GM12878 (cell line): ENCODE measurements at regions of chr16 and their contacts with region 1.

Region 1: DNA sequence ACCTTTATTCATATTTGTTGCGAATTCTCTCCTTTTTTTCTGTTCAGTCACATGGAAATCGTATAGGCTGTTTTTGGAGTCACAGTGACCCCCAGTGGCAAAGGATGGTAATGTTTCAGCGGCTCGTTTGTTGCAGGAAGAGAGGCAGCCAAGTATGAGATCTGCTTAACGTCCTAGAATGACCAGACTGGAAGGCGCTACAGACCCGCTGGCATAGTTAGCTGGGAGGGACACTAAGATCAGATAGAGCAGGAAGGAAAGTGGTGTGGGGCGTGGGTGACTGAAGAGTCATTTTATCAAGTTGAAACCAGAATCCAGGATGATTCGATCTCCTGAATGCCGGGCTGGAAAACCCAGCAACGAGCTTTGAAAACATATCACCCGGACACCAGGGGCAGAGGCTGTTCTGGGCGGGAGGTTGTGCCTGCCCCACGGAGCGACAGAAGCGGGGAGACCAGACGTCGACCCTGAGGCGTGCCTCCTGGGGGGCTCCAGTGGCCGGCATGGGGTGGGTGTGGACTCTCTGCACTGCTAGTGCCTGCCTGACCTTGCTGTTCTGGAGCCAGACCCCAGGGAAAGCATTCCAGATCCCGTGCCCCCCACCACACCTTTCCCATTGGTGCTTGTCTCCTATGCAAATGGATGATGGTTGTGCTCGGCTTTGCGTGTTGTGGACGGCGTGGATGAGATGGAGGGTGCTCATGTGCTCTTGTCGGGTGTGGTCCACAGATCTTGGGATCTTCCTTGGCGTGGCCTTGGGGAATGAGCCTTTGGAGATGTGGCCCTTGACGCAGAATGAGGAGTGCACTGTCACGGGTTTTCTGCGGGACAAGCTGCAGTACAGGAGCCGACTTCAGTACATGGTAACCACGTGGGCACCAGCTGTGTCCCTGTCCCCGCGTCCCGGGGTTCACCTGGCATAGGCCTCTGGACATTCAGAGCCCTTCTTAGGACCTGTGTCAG is 7.7 kb downstream of the IL34 start:
- DNase-seq: peak; percentile 44
- ATAC-seq: peak; percentile 86
- H3K4me3 ChIP-seq: no peak overlapping the region
- H3K27ac ChIP-seq: no peak overlapping the region
- H3K4me1 ChIP-seq: no peaks in the 10 kb centered on the region
- H3K27me3 ChIP-seq: no peaks in the 10 kb centered on the region
- CTCF ChIP-seq: peak; percentile 80 to 97 (median 96); a peak in 5 of 6 replicates
- EP300 ChIP-seq: no peak
- POLR2A ChIP-seq: no peak
- RAD21 ChIP-seq: peak; percentile 93

Region 2: DNA sequence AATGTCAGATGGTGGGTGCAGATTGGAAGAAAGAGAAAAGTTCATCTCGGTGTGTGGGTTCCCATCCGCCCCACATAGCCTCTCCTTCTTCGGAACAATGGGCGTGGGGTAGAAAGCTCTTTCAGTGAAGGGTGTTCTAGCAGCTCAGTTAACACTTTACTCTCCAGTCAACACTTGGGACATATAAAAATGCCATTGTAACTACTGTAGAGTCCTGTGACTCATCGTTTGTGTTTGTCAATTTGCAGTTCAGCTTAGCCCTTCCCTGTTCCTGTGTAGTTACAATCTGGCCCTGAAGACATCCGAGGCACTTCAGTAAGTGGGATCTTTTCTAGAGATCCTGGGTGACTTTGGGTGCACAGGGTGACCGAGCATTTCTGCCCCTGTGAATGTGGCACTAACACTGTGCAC is 492.0 kb before region 1 on chr16:
- CTCF ChIA-PET with region 1: interaction called, 9 read pairs
- POLR2A ChIA-PET with region 1: interaction called, 6 read pairs
- RAD21 ChIA-PET with region 1: no interaction called
- SMC1A ChIA-PET with region 1: interaction called, 6 read pairs
- in situ Hi-C with region 1: no loop called
- intact Hi-C with region 1: loop called (anchors 10 kb)
- DNase-seq: no peak
- ATAC-seq: no peak
- H3K4me3 ChIP-seq: no peak overlapping the region
- H3K27ac ChIP-seq: no peak overlapping the region
- H3K4me1 ChIP-seq: no peaks in the 10 kb centered on the region
- H3K27me3 ChIP-seq: no peaks in the 10 kb centered on the region
- CTCF ChIP-seq: no peak
- EP300 ChIP-seq: no peak
- POLR2A ChIP-seq: no peak
- RAD21 ChIP-seq: no peak

Region 3: DNA sequence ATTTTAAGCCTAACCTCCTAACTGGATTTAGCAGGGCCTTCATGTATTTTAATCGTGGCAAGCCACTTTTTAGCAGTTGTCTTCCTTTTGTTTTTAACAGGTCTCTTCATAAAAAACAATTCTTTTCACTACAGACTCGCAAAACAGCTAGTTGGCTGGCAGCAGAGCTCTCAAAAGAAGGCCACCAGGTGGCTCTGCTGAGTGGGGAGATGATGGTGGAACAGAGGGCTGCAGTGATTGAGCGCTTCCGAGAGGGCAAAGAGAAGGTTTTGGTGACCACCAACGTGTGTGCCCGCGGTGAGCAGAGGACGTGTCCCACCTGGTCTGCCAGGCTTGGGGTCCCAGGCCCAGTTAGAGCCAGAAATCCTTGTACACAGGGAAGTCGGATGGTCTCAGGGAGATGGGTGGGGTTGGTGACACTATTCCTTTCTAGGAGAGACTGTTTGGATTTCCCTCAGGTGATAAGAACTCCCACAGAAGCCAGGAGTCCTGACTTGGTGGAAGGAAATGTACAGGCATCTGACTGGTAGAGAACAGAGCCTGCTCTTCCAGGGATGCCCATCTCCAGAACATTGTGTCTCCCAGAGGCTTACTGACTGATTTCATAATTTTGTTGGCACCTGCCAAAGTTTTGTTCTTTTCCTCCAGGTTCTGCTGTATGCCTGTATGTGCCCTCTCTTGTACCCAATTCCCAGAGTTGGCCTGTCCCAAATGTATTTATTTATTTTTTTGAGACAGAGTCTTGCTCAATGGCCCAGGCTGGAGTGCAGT is 322.3 kb before region 1 on chr16:
- CTCF ChIA-PET with region 1: interaction called, 28 read pairs
- POLR2A ChIA-PET with region 1: no interaction called
- RAD21 ChIA-PET with region 1: interaction called, 9 read pairs
- SMC1A ChIA-PET with region 1: interaction called, 6 read pairs
- in situ Hi-C with region 1: no loop called
- intact Hi-C with region 1: loop called (anchors 2 kb)
- DNase-seq: no peak
- ATAC-seq: peak; percentile 86
- H3K4me3 ChIP-seq: no peak overlapping the region
- H3K27ac ChIP-seq: no peak overlapping the region
- H3K4me1 ChIP-seq: no peaks in the 10 kb centered on the region
- H3K27me3 ChIP-seq: no peaks in the 10 kb centered on the region
- CTCF ChIP-seq: peak; percentile 36 to 54 (median 40); a peak in 5 of 6 replicates
- EP300 ChIP-seq: no peak
- POLR2A ChIP-seq: no peak
- RAD21 ChIP-seq: peak; percentile 28

Region 4: GRCh38 chr16:70364399-70364798 is 289.7 kb before region 1 on chr16:
- CTCF ChIA-PET with region 1: interaction called, 15 read pairs
- POLR2A ChIA-PET with region 1: interaction called, 5 read pairs
- RAD21 ChIA-PET with region 1: interaction called, 3 read pairs
- SMC1A ChIA-PET with region 1: interaction called, 12 read pairs
- in situ Hi-C with region 1: loop called (anchors 5 kb)
- intact Hi-C with region 1: no loop called
- DNase-seq: no peak
- ATAC-seq: peak; percentile 56
- H3K4me3 ChIP-seq: no peak overlapping the region
- H3K27ac ChIP-seq: peak overlapping the region; percentile 27; the same call in 1 of the 2 replicates
- H3K4me1 ChIP-seq: no peaks in the 10 kb centered on the region
- H3K27me3 ChIP-seq: no peaks in the 10 kb centered on the region
- CTCF ChIP-seq: no peak
- EP300 ChIP-seq: no peak
- POLR2A ChIP-seq: no peak
- RAD21 ChIP-seq: no peak

Region 5: DNA sequence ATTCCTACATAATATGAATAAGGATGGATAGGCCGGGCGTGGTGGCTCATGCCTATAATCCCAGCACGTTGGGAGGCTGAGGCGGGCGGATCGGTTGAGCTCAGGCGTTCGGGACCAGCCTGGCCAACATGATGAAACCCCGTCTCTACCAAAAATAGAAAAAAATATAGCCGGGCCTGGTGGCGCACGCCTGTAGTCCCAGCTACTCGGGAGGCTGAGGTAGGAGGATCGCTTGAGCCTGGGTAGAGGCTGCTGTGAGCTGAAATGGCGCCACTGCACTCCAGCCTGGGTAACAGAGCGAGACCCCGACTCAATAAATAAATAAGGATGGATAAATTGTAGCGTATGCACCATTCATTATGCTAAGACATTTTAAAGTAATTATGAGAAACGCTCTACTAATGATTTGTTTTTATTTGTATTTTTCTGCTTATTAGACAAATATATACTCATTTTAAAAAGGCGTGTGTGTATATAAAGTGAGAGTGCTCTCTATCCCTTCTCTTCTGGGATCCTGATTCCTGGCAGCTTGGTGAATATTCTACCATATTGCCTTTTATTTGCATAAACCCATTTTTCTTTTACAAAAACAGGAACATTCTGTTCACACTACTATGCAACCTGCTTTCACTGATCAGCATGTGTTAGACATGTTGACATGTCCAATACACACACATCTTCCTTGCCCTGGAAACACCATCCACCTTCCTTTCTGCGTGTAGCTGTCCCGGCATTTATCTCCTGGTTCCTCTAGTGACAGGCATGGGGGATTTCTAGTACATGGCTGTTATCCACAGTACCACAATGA is 281.0 kb before region 1 on chr16:
- CTCF ChIA-PET with region 1: interaction called, 15 read pairs
- POLR2A ChIA-PET with region 1: interaction called, 5 read pairs
- RAD21 ChIA-PET with region 1: interaction called, 4 read pairs
- SMC1A ChIA-PET with region 1: interaction called, 12 read pairs
- in situ Hi-C with region 1: loop called (anchors 5 kb)
- intact Hi-C with region 1: loop called (anchors 5 kb)
- DNase-seq: no peak
- ATAC-seq: no peak
- H3K4me3 ChIP-seq: no peak overlapping the region
- H3K27ac ChIP-seq: no peak overlapping the region
- H3K4me1 ChIP-seq: peaks cover 5% of the 10 kb centered on the region
- H3K27me3 ChIP-seq: no peaks in the 10 kb centered on the region
- CTCF ChIP-seq: no peak
- EP300 ChIP-seq: no peak
- POLR2A ChIP-seq: no peak; the same call in 1 of the 2 replicates
- RAD21 ChIP-seq: no peak

Region 6: GRCh38 chr16:70402916-70403659 is 251.0 kb before region 1 on chr16:
- CTCF ChIA-PET with region 1: no interaction called
- POLR2A ChIA-PET with region 1: no interaction called
- RAD21 ChIA-PET with region 1: no interaction called
- SMC1A ChIA-PET with region 1: no interaction called
- in situ Hi-C with region 1: no loop called
- intact Hi-C with region 1: no loop called
- DNase-seq: no peak
- ATAC-seq: no peak
- H3K4me3 ChIP-seq: no peak overlapping the region
- H3K27ac ChIP-seq: peak overlapping the region; percentile 84
- H3K4me1 ChIP-seq: peaks cover 43% of the 10 kb centered on the region
- H3K27me3 ChIP-seq: no peaks in the 10 kb centered on the region; a peak in 1 of 4 replicates
- CTCF ChIP-seq: no peak
- EP300 ChIP-seq: no peak
- POLR2A ChIP-seq: no peak
- RAD21 ChIP-seq: no peak

Region 7: DNA sequence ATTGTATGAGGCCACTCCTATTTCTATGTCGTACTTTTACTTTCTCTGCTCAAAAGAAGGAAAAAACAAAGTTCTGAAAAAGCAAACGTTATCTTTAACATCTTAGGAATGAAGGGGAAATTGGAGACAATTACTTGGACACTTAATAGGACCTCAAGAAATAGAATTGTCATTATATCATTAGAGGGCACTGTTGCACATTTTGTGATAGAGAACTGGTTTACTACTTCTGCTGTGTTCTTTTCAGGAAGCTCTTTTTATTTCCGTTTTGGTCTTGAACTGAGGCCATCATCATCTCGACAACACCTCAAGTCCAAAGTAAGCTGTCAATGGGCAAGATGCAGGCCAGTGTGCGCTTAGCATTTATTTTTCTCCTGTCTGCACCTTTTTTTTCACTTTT is 145.3 kb before region 1 on chr16:
- CTCF ChIA-PET with region 1: interaction called, 9 read pairs
- POLR2A ChIA-PET with region 1: interaction called, 3 read pairs
- RAD21 ChIA-PET with region 1: interaction called, 5 read pairs
- SMC1A ChIA-PET with region 1: interaction called, 4 read pairs
- in situ Hi-C with region 1: no loop called
- intact Hi-C with region 1: loop called (anchors 1 kb)
- DNase-seq: no peak
- ATAC-seq: peak; percentile 94
- H3K4me3 ChIP-seq: no peak overlapping the region
- H3K27ac ChIP-seq: no peak overlapping the region
- H3K4me1 ChIP-seq: no peaks in the 10 kb centered on the region
- H3K27me3 ChIP-seq: no peaks in the 10 kb centered on the region
- CTCF ChIP-seq: peak in 2 of 3 experiments; percentile 28 to 55; a peak in 3 of 6 replicates
- EP300 ChIP-seq: no peak
- POLR2A ChIP-seq: no peak
- RAD21 ChIP-seq: peak; percentile 34; the same call in 1 of the 2 replicates

Region 8: GRCh38 chr16:70576431-70577255 is 77.4 kb before region 1 on chr16:
- CTCF ChIA-PET with region 1: no interaction called
- POLR2A ChIA-PET with region 1: no interaction called
- RAD21 ChIA-PET with region 1: interaction called, 3 read pairs
- SMC1A ChIA-PET with region 1: interaction called, 3 read pairs
- in situ Hi-C with region 1: no loop called
- intact Hi-C with region 1: loop called (anchors 5 kb)
- DNase-seq: peak; percentile 62
- ATAC-seq: peak; percentile 84
- H3K4me3 ChIP-seq: no peak overlapping the region
- H3K27ac ChIP-seq: peak overlapping the region; percentile 50; the same call in 1 of the 2 replicates
- H3K4me1 ChIP-seq: peaks cover 13% of the 10 kb centered on the region
- H3K27me3 ChIP-seq: no peaks in the 10 kb centered on the region
- CTCF ChIP-seq: no peak
- EP300 ChIP-seq: peak in 1 of 2 experiments; percentile 12; a peak in 1 of 4 replicates
- POLR2A ChIP-seq: peak; percentile 63
- RAD21 ChIP-seq: no peak

Region 9: GRCh38 chr16:70685938-70686375 is 31.9 kb after region 1 on chr16 and contains the start of gene MTSS2:
- CTCF ChIA-PET with region 1: no interaction called
- POLR2A ChIA-PET with region 1: no interaction called
- RAD21 ChIA-PET with region 1: no interaction called
- SMC1A ChIA-PET with region 1: no interaction called
- in situ Hi-C with region 1: no loop called
- intact Hi-C with region 1: no loop called
- DNase-seq: no peak
- ATAC-seq: no peak
- H3K4me3 ChIP-seq: no peak within 1 kb of the TSS
- H3K27ac ChIP-seq: no peak within 1 kb of the TSS
- H3K4me1 ChIP-seq: no peaks in the 10 kb centered on the region
- H3K27me3 ChIP-seq: no peaks in the 10 kb centered on the region
- CTCF ChIP-seq: no peak
- EP300 ChIP-seq: no peak
- POLR2A ChIP-seq: no peak
- RAD21 ChIP-seq: no peak
- polyA plus RNA-seq, gene MTSS2: not detected

Region 10: DNA sequence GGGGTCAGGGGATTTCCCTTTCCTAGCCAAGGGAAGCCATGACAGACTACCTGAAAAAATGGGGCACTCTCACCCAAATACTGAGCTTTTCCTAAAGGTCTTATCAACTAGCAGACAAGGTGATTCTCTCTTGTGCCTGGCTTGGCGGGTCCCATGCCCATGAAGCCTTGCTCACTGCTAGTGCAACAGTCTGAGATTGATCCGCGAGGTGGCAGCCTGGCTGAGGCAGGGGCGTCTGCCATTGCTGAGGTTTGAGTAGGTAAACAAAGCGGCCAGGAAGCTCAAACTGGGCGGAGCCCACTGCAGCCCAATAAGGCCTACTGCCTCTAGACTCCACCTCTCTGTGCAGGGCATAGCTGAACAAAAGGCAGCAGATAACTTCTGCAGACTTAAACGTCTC is 1670.5 kb after region 1 on chr16:
- CTCF ChIA-PET with region 1: no interaction called
- POLR2A ChIA-PET with region 1: no interaction called
- RAD21 ChIA-PET with region 1: no interaction called
- SMC1A ChIA-PET with region 1: no interaction called
- in situ Hi-C with region 1: no loop called
- intact Hi-C with region 1: no loop called
- DNase-seq: no peak
- ATAC-seq: no peak
- H3K4me3 ChIP-seq: no peak overlapping the region
- H3K27ac ChIP-seq: no peak overlapping the region
- H3K4me1 ChIP-seq: no peaks in the 10 kb centered on the region
- H3K27me3 ChIP-seq: no peaks in the 10 kb centered on the region
- CTCF ChIP-seq: no peak
- EP300 ChIP-seq: no peak
- POLR2A ChIP-seq: no peak
- RAD21 ChIP-seq: no peak